ENCODE measurements at regions of chr19 and their contacts with region 1.

Region 1: DNA sequence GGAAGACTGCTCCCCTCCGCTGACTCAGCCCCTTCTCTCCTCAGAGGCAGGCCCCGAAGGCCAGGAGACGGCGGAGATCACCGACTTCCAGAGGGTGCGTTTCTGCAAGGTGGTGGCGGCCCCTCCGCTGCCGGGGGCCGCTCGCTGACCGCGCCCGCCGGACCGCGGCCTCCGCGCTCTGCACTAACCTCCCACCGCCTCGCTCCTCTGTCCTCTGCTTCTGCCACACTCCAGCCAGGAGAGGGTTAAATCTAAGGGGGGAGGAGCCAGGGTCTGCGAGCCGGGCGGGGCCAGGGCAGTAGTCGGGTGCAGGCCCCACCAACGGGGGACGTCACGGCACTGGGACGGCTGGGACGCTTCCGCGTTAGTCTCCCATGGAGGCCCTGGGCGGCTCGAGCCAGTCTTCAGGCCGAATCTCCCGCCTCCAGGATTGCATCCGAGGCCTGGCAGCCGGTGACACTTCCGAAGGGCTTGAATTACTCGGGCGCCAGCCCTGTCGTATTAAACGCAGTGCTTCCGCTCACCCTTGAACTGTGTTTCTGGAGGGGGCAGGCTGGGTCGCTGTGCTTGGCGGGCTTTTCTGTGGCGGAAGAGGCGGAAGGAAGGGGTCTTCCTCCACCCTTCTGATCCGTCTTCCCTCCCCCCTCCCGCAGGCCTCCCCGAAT is 1.2 kb upstream of the INAFM1 start:
- DNase-seq: peak; percentile 93
- H3K4me3 Mint-ChIP-seq: peak overlapping the region; percentile 92
- H3K27ac Mint-ChIP-seq: peak overlapping the region; percentile 97
- H3K4me1 Mint-ChIP-seq: peaks cover 21% of the 10 kb centered on the region
- H3K27me3 Mint-ChIP-seq: no peaks in the 10 kb centered on the region

Region 2: GRCh38 chr19:47047763-47048405 is 225.6 kb before region 1 on chr19:
- CTCF ChIA-PET with region 1: no interaction called
- POLR2A ChIA-PET with region 1: no interaction called
- intact Hi-C with region 1: no loop called
- DNase-seq: peak; percentile 91
- H3K4me3 Mint-ChIP-seq: peak overlapping the region; percentile 99
- H3K27ac Mint-ChIP-seq: peak overlapping the region; percentile 87
- H3K4me1 Mint-ChIP-seq: peaks cover 12% of the 10 kb centered on the region
- H3K27me3 Mint-ChIP-seq: peaks cover 1% of the 10 kb centered on the region

Region 3: DNA sequence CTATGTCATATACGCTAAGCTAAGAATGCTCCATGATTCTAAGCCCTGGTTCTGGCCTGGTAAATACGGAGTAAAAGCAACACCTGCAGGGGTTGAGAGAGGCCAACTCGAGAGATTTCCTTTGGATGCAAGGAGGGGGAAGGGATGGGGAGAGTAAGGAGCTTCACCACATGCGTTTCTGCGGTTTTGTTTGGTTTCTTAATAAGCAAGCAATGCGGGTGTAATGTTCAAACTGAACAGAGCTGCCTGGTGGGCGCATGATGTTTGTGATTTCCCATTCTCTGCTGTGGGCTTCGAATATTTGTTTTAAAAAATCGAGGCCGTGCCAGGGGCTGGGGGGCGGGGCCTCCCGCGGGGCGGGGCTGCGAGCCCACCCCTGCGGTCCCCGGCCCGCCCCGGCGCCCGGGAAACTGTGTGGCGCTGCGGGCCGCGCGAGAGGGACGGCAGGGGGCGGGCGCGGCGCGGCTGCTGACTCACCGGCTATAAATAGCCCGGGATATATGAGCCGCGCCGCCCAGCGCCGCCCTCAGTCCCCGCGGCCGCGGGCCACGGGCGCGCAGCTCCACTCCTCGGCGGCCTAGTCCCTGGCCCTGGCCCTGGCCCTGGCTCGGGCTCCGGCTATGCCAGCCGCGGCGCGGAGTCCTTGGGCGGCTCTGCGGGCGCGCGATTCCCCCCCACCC is 47.6 kb before region 1 on chr19:
- CTCF ChIA-PET with region 1: no interaction called
- POLR2A ChIA-PET with region 1: interaction called, 4 read pairs
- intact Hi-C with region 1: loop called (anchors 2 kb)
- DNase-seq: peak; percentile 88
- H3K4me3 Mint-ChIP-seq: peak overlapping the region; percentile 77
- H3K27ac Mint-ChIP-seq: peak overlapping the region; percentile 89
- H3K4me1 Mint-ChIP-seq: peaks cover 10% of the 10 kb centered on the region
- H3K27me3 Mint-ChIP-seq: no peaks in the 10 kb centered on the region

Region 4: DNA sequence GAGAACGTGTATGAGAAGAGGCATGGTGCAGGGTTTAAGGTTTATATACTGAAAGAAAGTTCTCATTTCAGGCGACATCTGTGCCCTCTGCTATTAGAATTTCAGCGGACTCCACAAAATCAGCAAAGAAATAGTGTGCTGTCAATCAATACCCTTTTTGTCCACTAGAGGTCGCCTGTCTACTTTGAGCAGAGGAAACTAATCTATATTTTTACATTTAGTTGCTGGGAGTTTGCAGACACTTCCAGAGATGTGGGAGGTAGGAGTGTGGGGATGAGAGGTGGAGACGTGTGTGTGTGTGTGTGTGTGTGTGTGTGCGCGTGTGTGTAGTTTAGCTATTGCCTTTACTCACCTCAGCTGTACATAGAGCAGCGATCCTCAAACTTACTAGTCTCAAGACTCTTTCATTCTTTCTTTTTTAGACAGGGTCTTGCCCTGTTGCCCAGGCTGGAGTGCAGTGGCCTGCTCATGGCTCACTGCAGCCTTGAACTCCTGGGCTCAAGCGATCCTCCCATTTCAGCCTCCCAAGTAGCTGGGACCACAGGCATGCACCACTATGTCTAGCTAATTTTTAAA is 11.0 kb after region 1 on chr19:
- CTCF ChIA-PET with region 1: interaction called, 29 read pairs
- POLR2A ChIA-PET with region 1: interaction called, 4 read pairs
- intact Hi-C with region 1: no loop called
- DNase-seq: no peak
- H3K4me3 Mint-ChIP-seq: no peak overlapping the region
- H3K27ac Mint-ChIP-seq: no peak overlapping the region
- H3K4me1 Mint-ChIP-seq: peaks cover 10% of the 10 kb centered on the region
- H3K27me3 Mint-ChIP-seq: no peaks in the 10 kb centered on the region

Region 5: DNA sequence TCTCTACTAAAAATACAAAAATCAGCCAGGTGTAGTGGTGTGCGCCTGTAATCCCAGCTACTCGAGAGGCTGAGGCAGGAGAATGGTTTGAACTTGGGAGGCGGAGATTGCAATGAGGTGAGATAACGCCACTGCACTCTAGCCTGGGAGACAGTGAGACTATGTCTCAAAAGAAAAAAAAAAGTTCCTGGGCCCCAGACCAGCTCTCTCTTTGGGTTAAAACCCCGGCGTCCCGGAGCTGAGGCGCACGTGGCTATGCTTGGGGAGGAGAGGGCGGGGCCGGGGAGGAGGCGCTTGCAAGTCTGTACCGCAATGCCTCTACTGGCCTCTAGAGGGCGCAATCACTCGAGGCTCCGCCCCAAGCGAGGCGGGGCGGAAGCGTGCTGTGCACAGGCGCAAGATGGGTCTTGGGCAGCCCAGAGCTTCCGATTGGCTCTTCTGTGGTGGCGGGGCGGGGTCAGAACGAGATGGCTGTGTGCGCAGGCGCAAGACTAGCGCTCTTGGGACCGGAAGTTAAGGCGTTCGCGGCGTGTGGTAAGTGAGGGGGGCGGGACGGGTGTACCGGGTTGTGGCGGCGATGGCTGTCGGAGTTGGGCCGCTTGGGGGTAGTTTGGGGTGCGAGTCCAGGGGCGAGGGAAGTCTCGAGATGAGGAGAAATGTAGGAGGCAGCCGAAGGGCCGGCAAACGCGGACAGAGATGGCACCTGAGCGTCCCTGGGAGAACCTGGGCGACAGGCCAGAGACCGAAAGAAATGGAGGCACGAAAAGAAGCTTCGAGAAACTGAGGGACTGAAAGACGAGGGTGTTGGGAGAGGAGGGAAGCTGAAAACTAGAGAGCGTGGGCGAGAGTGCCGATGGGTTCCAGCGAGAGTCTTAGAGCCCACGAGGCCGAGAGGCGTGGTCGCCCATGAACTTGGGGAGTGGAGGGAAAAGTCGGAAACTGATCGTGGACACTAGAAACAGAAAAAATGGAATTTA is 75.7 kb after region 1 on chr19 and contains the start of gene DHX34:
- CTCF ChIA-PET with region 1: interaction called, 15 read pairs
- POLR2A ChIA-PET with region 1: interaction called, 9 read pairs
- intact Hi-C with region 1: loop called (anchors 1 kb)
- DNase-seq: peak; percentile 100
- H3K4me3 Mint-ChIP-seq: peak within 1 kb of the TSS; percentile 97
- H3K27ac Mint-ChIP-seq: peak within 1 kb of the TSS; percentile 89
- H3K4me1 Mint-ChIP-seq: peaks cover 43% of the 10 kb centered on the region
- H3K27me3 Mint-ChIP-seq: no peaks in the 10 kb centered on the region
- total RNA-seq, gene DHX34: 12.7 to 15.7 TPM

Region 6: DNA sequence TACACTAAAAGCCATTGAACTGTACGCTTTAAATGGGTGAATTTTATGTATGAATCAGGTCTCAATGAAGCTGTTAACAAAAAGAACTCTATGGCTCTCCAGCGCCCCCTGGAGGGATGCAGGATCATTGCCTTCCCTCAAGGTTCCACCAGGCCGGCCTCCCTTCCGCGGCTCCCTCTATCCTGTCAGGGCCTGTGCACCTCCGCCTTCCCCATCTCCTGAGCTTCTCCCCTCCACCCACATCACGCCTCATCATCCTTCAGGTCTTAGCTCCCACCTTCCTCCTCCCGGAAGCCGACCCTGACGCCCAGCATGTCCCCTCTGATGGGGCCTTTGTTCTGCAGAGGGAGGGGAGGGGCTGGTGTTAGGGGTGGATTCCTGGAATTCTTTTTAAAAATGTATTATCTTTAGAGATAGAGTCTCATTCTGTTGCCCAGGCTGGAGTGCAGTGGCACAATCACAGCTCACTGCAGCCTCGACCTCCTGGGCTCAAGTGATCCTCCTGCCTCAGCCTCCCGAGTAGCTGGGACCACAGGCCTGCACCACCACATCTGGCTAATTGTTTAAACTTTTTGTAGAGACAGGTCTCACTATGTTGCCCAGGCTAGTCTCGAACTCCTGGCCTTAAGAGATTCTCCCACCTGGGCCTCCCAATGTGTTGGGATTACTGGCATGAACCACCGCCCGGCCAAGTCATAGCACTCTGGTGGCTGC is 118.2 kb after region 1 on chr19:
- CTCF ChIA-PET with region 1: interaction called, 11 read pairs
- POLR2A ChIA-PET with region 1: no interaction called
- intact Hi-C with region 1: no loop called
- DNase-seq: peak; percentile 87
- H3K4me3 Mint-ChIP-seq: no peak overlapping the region
- H3K27ac Mint-ChIP-seq: no peak overlapping the region
- H3K4me1 Mint-ChIP-seq: no peaks in the 10 kb centered on the region
- H3K27me3 Mint-ChIP-seq: peaks cover 5% of the 10 kb centered on the region

Region 7: DNA sequence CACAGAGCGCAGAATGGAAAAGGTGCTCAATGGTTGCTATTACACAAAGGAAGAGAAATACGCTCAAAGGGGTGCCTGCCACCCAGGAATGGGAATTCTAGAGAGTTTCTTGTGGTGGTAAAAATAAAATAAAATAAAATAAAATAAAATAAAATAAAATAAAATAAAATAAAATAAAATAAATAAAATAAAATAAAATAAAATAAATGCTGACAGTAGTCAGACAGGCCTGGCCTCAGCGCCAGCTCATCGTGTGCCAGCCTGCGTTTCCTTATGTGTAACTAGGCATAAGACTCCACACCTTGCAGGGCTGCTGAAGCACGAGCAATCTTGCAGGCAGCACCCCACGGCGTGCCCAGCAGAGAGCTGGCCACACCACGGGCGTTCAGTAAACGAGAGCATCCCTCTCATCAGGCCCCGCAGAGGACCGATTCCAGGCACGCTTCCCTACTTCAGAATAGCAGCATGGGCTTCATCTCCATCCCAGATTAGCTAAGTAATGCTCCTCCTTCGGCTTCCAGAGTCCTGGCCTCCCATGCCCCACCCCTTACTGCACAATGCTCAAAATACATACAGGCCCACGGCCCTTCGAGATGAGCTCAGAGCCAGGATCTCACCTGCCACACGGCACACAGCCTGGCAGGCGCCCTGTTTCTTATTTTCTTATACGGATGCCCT is 235.9 kb after region 1 on chr19:
- CTCF ChIA-PET with region 1: no interaction called
- POLR2A ChIA-PET with region 1: no interaction called
- intact Hi-C with region 1: no loop called
- DNase-seq: no peak
- H3K4me3 Mint-ChIP-seq: no peak overlapping the region
- H3K27ac Mint-ChIP-seq: no peak overlapping the region
- H3K4me1 Mint-ChIP-seq: peaks cover 44% of the 10 kb centered on the region
- H3K27me3 Mint-ChIP-seq: no peaks in the 10 kb centered on the region

Region 8: DNA sequence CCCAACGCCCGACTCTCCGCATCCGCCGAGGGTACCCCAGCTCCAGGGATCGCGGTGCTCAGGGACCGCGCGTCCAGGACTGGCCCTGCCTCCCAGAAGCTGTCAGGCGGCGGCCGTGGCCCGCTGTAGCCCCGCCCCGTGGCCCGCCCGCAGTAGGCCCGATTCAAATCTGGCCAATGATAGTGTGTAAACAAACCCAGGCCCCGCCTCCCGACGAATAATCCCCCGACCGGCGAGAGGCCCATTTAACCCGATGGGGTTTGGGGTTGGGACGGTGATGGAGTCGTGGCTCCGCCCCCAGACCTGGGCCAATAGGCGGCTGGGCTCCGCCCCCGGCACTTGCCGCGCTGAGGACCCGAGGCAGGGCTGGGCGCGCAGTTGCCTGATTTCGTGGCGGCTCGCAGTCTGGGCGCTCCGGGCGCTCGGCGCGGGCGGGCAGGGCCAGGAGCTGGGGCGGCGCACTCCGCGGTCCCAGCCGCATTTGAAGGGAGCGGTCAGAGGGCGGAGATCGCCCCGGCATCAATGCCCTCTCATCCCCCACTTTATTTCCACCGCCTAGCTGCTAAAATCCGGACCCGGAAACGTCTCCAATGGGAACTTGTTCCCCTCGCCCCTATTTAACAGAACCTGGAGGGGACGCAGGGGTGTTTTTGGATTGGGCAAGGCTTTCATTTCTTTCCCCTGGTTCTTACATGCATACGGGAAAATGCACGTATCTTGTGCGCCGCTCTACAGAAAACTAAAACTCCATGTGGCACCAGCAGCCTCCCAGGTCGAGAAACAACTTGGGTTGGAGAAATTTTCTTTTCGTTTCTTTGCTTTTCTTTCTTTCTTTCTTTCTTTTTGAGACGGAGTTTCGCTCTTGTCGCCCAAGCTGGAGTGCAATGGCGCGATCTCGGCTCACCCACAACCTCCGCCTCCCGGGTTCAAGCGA is 327.1 kb after region 1 on chr19:
- CTCF ChIA-PET with region 1: no interaction called
- POLR2A ChIA-PET with region 1: no interaction called
- intact Hi-C with region 1: loop called (anchors 5 kb)
- DNase-seq: peak; percentile 100
- H3K4me3 Mint-ChIP-seq: peak overlapping the region; percentile 83
- H3K27ac Mint-ChIP-seq: peak overlapping the region; percentile 86
- H3K4me1 Mint-ChIP-seq: peaks cover 30% of the 10 kb centered on the region
- H3K27me3 Mint-ChIP-seq: no peaks in the 10 kb centered on the region

Measured in activated CD4-positive, alpha-beta memory T cell treated with anti-CD3 and anti-CD28 coated beads for 36 hours (primary cell).